ENCODE measurements at regions of chr5 and their contacts with region 1.

Region 1: GRCh38 chr5:113513384-113514288 is at the start of gene YTHDC2:
- DNase-seq: peak; percentile 65
- H3K4me3 ChIP-seq: peak within 1 kb of the TSS; percentile 60 to 68
- H3K27ac ChIP-seq: peak within 1 kb of the TSS; percentile 80 to 90
- H3K4me1 ChIP-seq: no peaks in the 10 kb centered on the region
- H3K27me3 ChIP-seq: no peaks in the 10 kb centered on the region
- CTCF ChIP-seq: peak in 3 of 4 experiments; percentile 8 to 42 (median 21)
- POLR2A ChIP-seq: peak; percentile 65
- total RNA-seq, gene YTHDC2: 17.7 to 32.0 TPM

Region 2: GRCh38 chr5:113336975-113337374 is 176.7 kb before region 1 on chr5:
- intact Hi-C with region 1: loop called (anchors 5 kb)
- DNase-seq: peak; percentile 26
- H3K4me3 ChIP-seq: no peak overlapping the region
- H3K27ac ChIP-seq: peak overlapping the region in 1 of 2 donors; percentile 28
- H3K4me1 ChIP-seq: no peaks in the 10 kb centered on the region
- H3K27me3 ChIP-seq: no peaks in the 10 kb centered on the region
- CTCF ChIP-seq: peak in 1 of 4 experiments; percentile 13
- POLR2A ChIP-seq: no peak

Region 3: DNA sequence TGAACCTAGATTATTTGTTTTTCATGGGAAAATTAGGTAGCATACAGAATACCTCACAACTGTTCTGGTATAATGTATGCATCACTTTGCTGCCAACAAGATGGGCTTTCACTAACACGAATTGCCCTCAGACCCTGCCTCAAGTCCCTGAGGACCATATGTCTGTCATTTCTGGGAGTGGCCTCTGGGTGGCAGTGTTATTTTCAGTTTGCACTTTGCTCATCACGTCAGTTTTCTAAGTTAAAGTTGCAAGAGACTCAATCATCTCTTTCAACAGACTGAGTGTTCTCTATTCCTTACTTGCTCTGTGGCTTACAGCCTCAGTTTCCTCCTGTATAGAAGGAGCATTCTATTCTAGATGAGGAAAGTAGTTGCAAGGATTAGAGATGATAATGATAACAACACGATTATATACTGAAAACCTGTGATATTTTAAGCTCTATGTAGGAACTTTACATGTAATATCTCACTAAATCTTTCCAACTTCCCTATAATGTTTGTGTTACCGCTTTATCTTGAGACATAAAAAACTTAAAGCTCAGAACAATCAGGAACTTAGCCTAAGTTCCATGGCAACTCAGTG is 134.6 kb before region 1 on chr5:
- intact Hi-C with region 1: loop called (anchors 5 kb)
- DNase-seq: peak; percentile 58
- H3K4me3 ChIP-seq: no peak overlapping the region
- H3K27ac ChIP-seq: no peak overlapping the region
- H3K4me1 ChIP-seq: no peaks in the 10 kb centered on the region
- H3K27me3 ChIP-seq: no peaks in the 10 kb centered on the region
- CTCF ChIP-seq: peak; percentile 53 to 72 (median 68)
- POLR2A ChIP-seq: no peak

Region 4: DNA sequence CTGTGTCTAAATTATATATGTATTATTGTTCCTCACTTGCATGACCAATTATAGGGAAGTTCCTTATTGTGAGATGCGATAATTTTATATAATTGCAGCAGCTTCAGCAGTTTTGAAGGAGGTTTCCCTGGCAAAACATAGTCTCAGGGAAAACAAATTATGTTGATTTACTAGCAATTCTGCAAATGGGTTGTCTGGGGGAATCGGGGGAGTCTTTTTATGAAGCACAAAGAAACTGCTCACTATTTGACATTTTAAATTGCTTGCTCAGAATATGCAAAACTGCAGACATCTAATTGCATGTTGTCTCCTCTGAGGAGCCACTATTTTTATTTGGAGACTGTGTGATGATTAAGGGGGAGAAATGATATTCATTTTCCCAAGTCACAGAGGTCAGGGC is 361.5 kb after region 1 on chr5:
- intact Hi-C with region 1: no loop called
- DNase-seq: no peak
- H3K4me3 ChIP-seq: no peak overlapping the region
- H3K27ac ChIP-seq: no peak overlapping the region
- H3K4me1 ChIP-seq: no peaks in the 10 kb centered on the region
- H3K27me3 ChIP-seq: no peaks in the 10 kb centered on the region
- CTCF ChIP-seq: no peak
- POLR2A ChIP-seq: no peak